GM12878 (cell line): ENCODE measurements at regions of chr17 and their contacts with region 1.

Region 1: GRCh38 chr17:42577532-42578281 is at the start of gene PSMC3IP:
- DNase-seq: peak; percentile 76
- ATAC-seq: peak; percentile 87
- H3K4me3 ChIP-seq: peak within 1 kb of the TSS; percentile 79
- H3K27ac ChIP-seq: peak within 1 kb of the TSS; percentile 89
- H3K4me1 ChIP-seq: peaks cover 16% of the 10 kb centered on the region
- H3K27me3 ChIP-seq: no peaks in the 10 kb centered on the region
- CTCF ChIP-seq: peak; percentile 34 to 64 (median 56); a peak in 4 of 6 replicates
- EP300 ChIP-seq: no peak
- POLR2A ChIP-seq: peak; percentile 85
- RAD21 ChIP-seq: no peak
- polyA plus RNA-seq, gene PSMC3IP: 6.8 to 7.1 TPM

Region 2: DNA sequence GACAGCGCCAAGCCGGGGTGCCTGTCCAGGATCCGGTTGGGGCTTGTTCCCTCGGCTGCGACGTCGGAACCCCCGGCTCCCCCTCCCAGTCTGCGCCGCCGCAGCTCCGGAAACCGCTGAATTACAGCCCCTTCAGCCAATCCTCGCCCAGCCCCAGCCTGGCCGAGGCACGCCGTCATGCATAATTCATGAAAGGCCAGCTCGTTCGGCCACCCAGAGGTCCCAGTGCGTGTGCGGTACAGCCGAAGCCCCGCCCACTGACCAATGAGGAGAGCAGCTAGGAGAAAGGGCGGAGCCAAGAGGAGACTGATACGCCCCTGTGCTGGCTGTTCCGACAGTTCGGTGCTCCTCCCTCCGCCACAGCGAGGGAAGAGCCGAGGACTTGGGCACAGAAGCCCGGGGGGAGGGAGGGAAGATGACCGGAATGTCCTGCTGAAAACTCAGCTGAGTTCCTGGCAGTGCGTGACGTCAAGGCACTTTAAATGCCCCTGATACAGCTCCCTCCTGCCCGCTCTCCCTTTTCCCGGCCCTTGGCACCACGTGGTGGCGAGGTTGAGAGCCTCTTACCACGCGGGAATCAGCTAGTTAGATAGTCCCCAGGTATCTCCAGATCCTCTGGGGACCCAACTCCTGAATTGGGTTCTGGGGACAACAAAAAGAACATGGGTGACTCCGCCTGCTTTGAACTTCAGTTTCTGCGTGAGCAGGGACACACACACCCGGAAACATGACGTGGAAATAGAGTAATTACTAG is 189.1 kb before region 1 on chr17 and contains the start of gene STAT3:
- CTCF ChIA-PET with region 1: interaction called, 11 read pairs
- POLR2A ChIA-PET with region 1: interaction called, 3 read pairs
- RAD21 ChIA-PET with region 1: no interaction called
- SMC1A ChIA-PET with region 1: no interaction called
- in situ Hi-C with region 1: no loop called
- intact Hi-C with region 1: no loop called
- DNase-seq: peak; percentile 100
- ATAC-seq: peak; percentile 95
- H3K4me3 ChIP-seq: peak within 1 kb of the TSS; percentile 91
- H3K27ac ChIP-seq: peak within 1 kb of the TSS; percentile 97
- H3K4me1 ChIP-seq: peaks cover 17% of the 10 kb centered on the region
- H3K27me3 ChIP-seq: no peaks in the 10 kb centered on the region
- CTCF ChIP-seq: 0 out of 6 replicates have a peak, but pooled peaks of 1 of the 3 experiments have one; percentile 3
- EP300 ChIP-seq: peak; percentile 89 to 100
- POLR2A ChIP-seq: peak; percentile 92
- RAD21 ChIP-seq: peak; percentile 21; the same call in 1 of the 2 replicates
- polyA plus RNA-seq, gene STAT3: 18.4 to 18.9 TPM

Region 3: GRCh38 chr17:42519546-42520491 is 57.9 kb before region 1 on chr17:
- CTCF ChIA-PET with region 1: no interaction called
- POLR2A ChIA-PET with region 1: no interaction called
- RAD21 ChIA-PET with region 1: no interaction called
- SMC1A ChIA-PET with region 1: no interaction called
- in situ Hi-C with region 1: no loop called
- intact Hi-C with region 1: no loop called
- DNase-seq: no peak
- ATAC-seq: no peak
- H3K4me3 ChIP-seq: no peak overlapping the region
- H3K27ac ChIP-seq: no peak overlapping the region
- H3K4me1 ChIP-seq: no peaks in the 10 kb centered on the region
- H3K27me3 ChIP-seq: no peaks in the 10 kb centered on the region
- CTCF ChIP-seq: no peak
- EP300 ChIP-seq: no peak
- POLR2A ChIP-seq: no peak
- RAD21 ChIP-seq: no peak

Region 4: GRCh38 chr17:42566883-42567573 is 10.7 kb before region 1 on chr17 and contains the start of gene MLX:
- CTCF ChIA-PET with region 1: interaction called, 23 read pairs
- POLR2A ChIA-PET with region 1: interaction called, 14 read pairs
- RAD21 ChIA-PET with region 1: interaction called, 14 read pairs
- SMC1A ChIA-PET with region 1: interaction called, 13 read pairs
- in situ Hi-C with region 1: no loop called
- intact Hi-C with region 1: no loop called
- DNase-seq: peak; percentile 68
- ATAC-seq: peak; percentile 90
- H3K4me3 ChIP-seq: peak within 1 kb of the TSS; percentile 96
- H3K27ac ChIP-seq: peak within 1 kb of the TSS; percentile 68
- H3K4me1 ChIP-seq: peaks cover 17% of the 10 kb centered on the region
- H3K27me3 ChIP-seq: no peaks in the 10 kb centered on the region
- CTCF ChIP-seq: no peak
- EP300 ChIP-seq: no peak
- POLR2A ChIP-seq: peak; percentile 85
- RAD21 ChIP-seq: no peak
- polyA plus RNA-seq, gene MLX: 38.3 to 49.1 TPM

Region 5: GRCh38 chr17:42618442-42619150 is 40.9 kb after region 1 on chr17:
- CTCF ChIA-PET with region 1: interaction called, 57 read pairs
- POLR2A ChIA-PET with region 1: interaction called, 40 read pairs
- RAD21 ChIA-PET with region 1: interaction called, 55 read pairs
- SMC1A ChIA-PET with region 1: interaction called, 56 read pairs
- in situ Hi-C with region 1: no loop called
- intact Hi-C with region 1: loop called (anchors 2 kb)
- DNase-seq: peak; percentile 93
- ATAC-seq: peak; percentile 86
- H3K4me3 ChIP-seq: peak overlapping the region; percentile 58
- H3K27ac ChIP-seq: peak overlapping the region; percentile 91
- H3K4me1 ChIP-seq: peaks cover 33% of the 10 kb centered on the region
- H3K27me3 ChIP-seq: no peaks in the 10 kb centered on the region
- CTCF ChIP-seq: peak in 1 of 3 experiments; percentile 62; a peak in 3 of 6 replicates
- EP300 ChIP-seq: peak; percentile 49 to 84; a peak in 2 of 4 replicates
- POLR2A ChIP-seq: no peak; the same call in 1 of the 2 replicates
- RAD21 ChIP-seq: peak; percentile 64

Region 6: DNA sequence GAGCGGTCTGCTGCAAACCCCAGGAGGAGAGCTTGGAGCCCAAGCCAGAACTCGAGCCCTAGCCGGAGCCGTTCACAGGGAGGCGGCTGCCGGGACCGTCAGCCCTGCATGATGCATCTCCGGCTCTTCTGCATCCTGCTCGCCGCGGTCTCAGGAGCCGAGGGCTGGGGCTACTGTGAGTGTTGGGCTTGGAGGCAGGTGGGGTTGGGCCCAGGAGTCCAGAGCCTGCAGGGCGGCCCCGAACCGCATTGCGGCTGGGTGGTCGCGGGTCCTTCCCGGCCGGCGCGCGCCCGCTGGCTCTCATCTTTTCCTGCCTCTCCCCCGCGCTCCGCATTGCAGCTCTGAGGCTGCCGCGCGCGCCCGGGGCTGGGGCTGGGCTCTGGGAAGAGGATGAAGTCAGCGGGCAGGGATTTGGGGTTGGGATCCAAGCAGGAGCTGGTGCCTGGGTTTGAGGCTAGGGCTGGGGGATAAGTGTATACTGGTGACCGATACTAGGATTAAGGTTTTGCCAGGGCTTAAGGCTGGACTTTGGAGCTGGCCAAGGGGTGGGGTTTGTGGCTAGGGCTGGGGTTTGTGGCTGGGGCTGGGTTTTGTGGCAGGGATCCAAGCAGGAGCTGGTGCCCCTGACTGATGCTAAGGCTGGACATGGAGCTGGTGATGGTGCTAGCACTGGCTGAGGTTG is 105.2 kb after region 1 on chr17:
- CTCF ChIA-PET with region 1: interaction called, 239 read pairs
- POLR2A ChIA-PET with region 1: interaction called, 120 read pairs
- RAD21 ChIA-PET with region 1: interaction called, 152 read pairs
- SMC1A ChIA-PET with region 1: interaction called, 124 read pairs
- in situ Hi-C with region 1: no loop called
- intact Hi-C with region 1: loop called (anchors 1 kb)
- DNase-seq: no peak
- ATAC-seq: peak; percentile 6
- H3K4me3 ChIP-seq: peak overlapping the region; percentile 92
- H3K27ac ChIP-seq: peak overlapping the region; percentile 83
- H3K4me1 ChIP-seq: peaks cover 16% of the 10 kb centered on the region
- H3K27me3 ChIP-seq: no peaks in the 10 kb centered on the region
- CTCF ChIP-seq: no peak
- EP300 ChIP-seq: no peak
- POLR2A ChIP-seq: no peak
- RAD21 ChIP-seq: no peak

Region 7: GRCh38 chr17:42760652-42761581 is 183.2 kb after region 1 on chr17 and contains the start of gene RAMP2:
- CTCF ChIA-PET with region 1: interaction called, 164 read pairs
- POLR2A ChIA-PET with region 1: interaction called, 8 read pairs
- RAD21 ChIA-PET with region 1: interaction called, 61 read pairs
- SMC1A ChIA-PET with region 1: interaction called, 71 read pairs
- in situ Hi-C with region 1: loop called (anchors 10 kb)
- intact Hi-C with region 1: loop called (anchors 1 kb)
- DNase-seq: no peak
- ATAC-seq: peak; percentile 36
- H3K4me3 ChIP-seq: peak within 1 kb of the TSS; percentile 37; the same call in 1 of the 2 replicates
- H3K27ac ChIP-seq: no peak within 1 kb of the TSS
- H3K4me1 ChIP-seq: peaks cover 17% of the 10 kb centered on the region
- H3K27me3 ChIP-seq: no peaks in the 10 kb centered on the region
- CTCF ChIP-seq: no peak
- EP300 ChIP-seq: no peak
- POLR2A ChIP-seq: no peak
- RAD21 ChIP-seq: no peak
- polyA plus RNA-seq, gene RAMP2: 0.20 to 0.21 TPM

Region 8: GRCh38 chr17:42937712-42938596 is 360.2 kb after region 1 on chr17:
- CTCF ChIA-PET with region 1: no interaction called
- POLR2A ChIA-PET with region 1: no interaction called
- RAD21 ChIA-PET with region 1: no interaction called
- SMC1A ChIA-PET with region 1: interaction called, 6 read pairs
- in situ Hi-C with region 1: no loop called
- intact Hi-C with region 1: loop called (anchors 10 kb)
- DNase-seq: no peak
- ATAC-seq: peak; percentile 90
- H3K4me3 ChIP-seq: no peak overlapping the region
- H3K27ac ChIP-seq: no peak overlapping the region
- H3K4me1 ChIP-seq: no peaks in the 10 kb centered on the region
- H3K27me3 ChIP-seq: no peaks in the 10 kb centered on the region
- CTCF ChIP-seq: peak; percentile 57 to 79 (median 58)
- EP300 ChIP-seq: no peak
- POLR2A ChIP-seq: no peak
- RAD21 ChIP-seq: peak; percentile 83